Naive thymus-derived CD4-positive, alpha-beta T cell (primary cell): ENCODE measurements at regions of chr11 and their contacts with region 1.

Region 1: GRCh38 chr11:64916775-64917662 is at the start of gene ATG2A:
- DNase-seq: peak; percentile 95 to 100 (median 99)
- ATAC-seq: peak; percentile 97
- H3K4me3 ChIP-seq: peak within 1 kb of the TSS; percentile 92
- H3K4me3 Mint-ChIP-seq: peak within 1 kb of the TSS; percentile 88 to 98 (median 91)
- H3K27ac ChIP-seq: peak within 1 kb of the TSS; percentile 83
- H3K27ac Mint-ChIP-seq: peak within 1 kb of the TSS; percentile 81 to 99 (median 91)
- H3K4me1 ChIP-seq: peaks cover 18 to 22% of the 10 kb centered on the region in 2 donors
- H3K4me1 Mint-ChIP-seq: peaks cover 14 to 33% (median 25%) of the 10 kb centered on the region in 7 donors
- H3K27me3 ChIP-seq: no peaks in the 10 kb centered on the region
- H3K27me3 Mint-ChIP-seq: no peaks in the 10 kb centered on the region
- total RNA-seq, gene ATG2A: 30.6 to 105 (median 36.2) TPM

Region 2: DNA sequence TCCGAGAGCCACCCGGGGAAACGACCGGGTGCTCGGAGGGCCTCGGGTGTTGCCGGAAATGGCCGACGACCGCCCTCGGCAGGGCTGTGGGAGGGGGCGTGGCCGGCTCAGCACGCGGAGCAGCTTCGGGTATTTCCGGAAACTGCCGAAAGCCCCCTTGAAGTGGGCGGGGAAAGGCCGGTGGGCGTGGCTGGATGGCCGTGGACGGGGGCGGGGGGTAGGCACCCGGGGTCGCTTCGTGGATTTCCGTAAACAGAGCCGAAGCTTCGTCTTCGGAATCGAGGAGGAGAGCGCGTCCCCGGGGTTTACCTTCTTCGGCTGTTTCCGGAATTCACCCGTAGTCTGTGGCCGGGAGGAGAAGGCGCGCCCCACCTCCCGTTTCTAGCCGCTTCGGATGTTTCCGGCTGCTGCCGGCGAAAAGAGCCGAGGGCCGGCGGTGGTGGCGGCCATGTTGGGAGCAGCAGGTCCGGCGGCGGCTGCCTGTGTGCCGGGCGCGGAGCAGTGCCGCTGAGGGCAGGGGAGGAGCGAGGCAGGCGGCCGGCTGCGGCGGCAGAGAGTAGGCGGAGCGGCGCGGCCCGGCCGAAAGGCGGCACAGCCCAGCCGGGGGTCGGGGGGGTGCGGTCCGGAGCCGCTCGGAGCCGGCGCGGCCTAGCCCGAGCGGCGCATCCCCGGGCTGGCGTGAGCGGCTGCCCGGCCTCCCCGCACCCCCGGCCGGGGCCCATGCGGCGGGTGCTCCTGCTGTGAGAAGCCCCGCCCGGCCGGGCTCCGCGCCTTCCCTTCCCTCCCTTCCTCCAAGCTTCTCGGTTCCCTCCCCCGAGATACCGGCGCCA is 1078.1 kb before region 1 on chr11 and contains the start of gene MARK2:
- CTCF ChIA-PET with region 1: no interaction called
- POLR2A ChIA-PET with region 1: no interaction called
- intact Hi-C with region 1: no loop called
- DNase-seq: peak; percentile 99 to 100 (median 99)
- ATAC-seq: peak; percentile 93
- H3K4me3 ChIP-seq: peak within 1 kb of the TSS; percentile 87
- H3K4me3 Mint-ChIP-seq: peak within 1 kb of the TSS; percentile 86 to 99 (median 92)
- H3K27ac ChIP-seq: peak within 1 kb of the TSS; percentile 94
- H3K27ac Mint-ChIP-seq: peak within 1 kb of the TSS; percentile 74 to 97 (median 88)
- H3K4me1 ChIP-seq: peaks cover 32 to 35% of the 10 kb centered on the region in 2 donors
- H3K4me1 Mint-ChIP-seq: peaks cover 44 to 57% (median 54%) of the 10 kb centered on the region in 7 donors
- H3K27me3 ChIP-seq: no peaks in the 10 kb centered on the region
- H3K27me3 Mint-ChIP-seq: no peaks in the 10 kb centered on the region
- total RNA-seq, gene MARK2: 42.3 to 69.1 (median 56.8) TPM

Region 3: DNA sequence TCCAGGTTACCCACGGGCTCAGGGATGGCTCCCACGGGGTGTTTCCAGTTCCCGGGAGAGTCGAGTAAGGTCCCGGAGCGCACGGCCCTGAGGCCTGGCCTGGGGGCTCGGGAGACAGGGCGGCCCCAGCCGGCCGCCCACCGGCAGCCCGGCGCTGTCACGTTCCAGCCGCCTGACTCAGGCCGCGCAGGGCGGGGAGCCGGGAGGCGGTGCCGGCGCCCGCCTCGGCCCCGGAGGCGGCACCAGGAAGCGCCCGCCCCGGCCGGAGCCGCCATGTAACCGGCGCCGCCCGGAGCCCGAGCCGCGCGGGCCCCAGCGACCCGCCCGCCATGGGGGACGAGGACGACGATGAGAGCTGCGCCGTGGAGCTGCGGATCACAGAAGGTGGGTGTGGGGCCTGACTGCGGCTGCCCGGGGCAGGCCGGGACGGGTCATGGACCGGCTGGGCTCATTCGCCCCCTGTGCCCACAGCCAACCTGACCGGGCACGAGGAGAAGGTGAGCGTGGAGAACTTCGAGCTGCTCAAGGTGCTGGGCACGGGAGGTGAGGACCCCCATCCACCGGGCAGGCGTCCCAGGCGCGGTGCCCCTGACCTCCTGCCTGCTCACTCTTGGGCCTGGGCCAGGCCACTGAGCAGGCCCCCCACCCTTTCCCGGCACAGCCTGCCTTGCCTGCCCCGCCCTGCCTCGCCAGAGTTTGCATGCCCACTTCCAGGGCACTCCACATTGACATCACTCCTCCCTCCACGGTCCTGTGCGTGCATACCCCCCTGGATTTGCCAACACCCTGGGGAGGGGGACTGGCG is 557.9 kb before region 1 on chr11 and contains the start of gene RPS6KA4:
- CTCF ChIA-PET with region 1: no interaction called
- POLR2A ChIA-PET with region 1: no interaction called
- intact Hi-C with region 1: no loop called
- DNase-seq: peak in 7 of 9 donors; percentile 25 to 79 (median 36)
- ATAC-seq: peak; percentile 80
- H3K4me3 ChIP-seq: peak within 1 kb of the TSS; percentile 60
- H3K4me3 Mint-ChIP-seq: peak within 1 kb of the TSS; percentile 83 to 100 (median 91)
- H3K27ac ChIP-seq: peak within 1 kb of the TSS; percentile 68
- H3K27ac Mint-ChIP-seq: peak within 1 kb of the TSS; percentile 56 to 94 (median 72)
- H3K4me1 ChIP-seq: peaks cover 10 to 16% of the 10 kb centered on the region in 2 donors
- H3K4me1 Mint-ChIP-seq: peaks cover 16 to 40% (median 30%) of the 10 kb centered on the region in 7 donors
- H3K27me3 ChIP-seq: no peaks in the 10 kb centered on the region
- H3K27me3 Mint-ChIP-seq: no peaks in the 10 kb centered on the region
- total RNA-seq, gene RPS6KA4: 14.2 to 35.7 (median 27.9) TPM

Region 4: GRCh38 chr11:64864473-64865285 is 52.3 kb before region 1 on chr11:
- CTCF ChIA-PET with region 1: no interaction called
- POLR2A ChIA-PET with region 1: interaction called, 3 read pairs
- intact Hi-C with region 1: loop called in 1 of 2 experiments (anchors 2 kb)
- DNase-seq: peak in 1 of 9 donors; percentile 63
- ATAC-seq: no peak
- H3K4me3 ChIP-seq: peak overlapping the region; percentile 45
- H3K4me3 Mint-ChIP-seq: peak overlapping the region; percentile 45 to 91 (median 78)
- H3K27ac ChIP-seq: peak overlapping the region; percentile 76
- H3K27ac Mint-ChIP-seq: peak overlapping the region; percentile 89 to 98 (median 96)
- H3K4me1 ChIP-seq: peaks cover 86 to 98% of the 10 kb centered on the region in 2 donors
- H3K4me1 Mint-ChIP-seq: peaks cover 68 to 94% (median 82%) of the 10 kb centered on the region in 7 donors
- H3K27me3 ChIP-seq: no peaks in the 10 kb centered on the region
- H3K27me3 Mint-ChIP-seq: no peaks in the 10 kb centered on the region

Region 5: GRCh38 chr11:64878494-64879243 is 38.4 kb before region 1 on chr11 and contains the start of gene EHD1:
- CTCF ChIA-PET with region 1: interaction called, 3 read pairs
- POLR2A ChIA-PET with region 1: interaction called, 3 read pairs
- intact Hi-C with region 1: loop called (anchors 1 kb)
- DNase-seq: peak; percentile 98 to 99 (median 99)
- ATAC-seq: peak; percentile 91
- H3K4me3 ChIP-seq: peak within 1 kb of the TSS; percentile 100
- H3K4me3 Mint-ChIP-seq: peak within 1 kb of the TSS; percentile 95 to 99 (median 98)
- H3K27ac ChIP-seq: peak within 1 kb of the TSS; percentile 81
- H3K27ac Mint-ChIP-seq: peak within 1 kb of the TSS; percentile 88 to 98 (median 94)
- H3K4me1 ChIP-seq: peaks cover 39 to 45% of the 10 kb centered on the region in 2 donors
- H3K4me1 Mint-ChIP-seq: peaks cover 49 to 65% (median 60%) of the 10 kb centered on the region in 7 donors
- H3K27me3 ChIP-seq: no peaks in the 10 kb centered on the region
- H3K27me3 Mint-ChIP-seq: no peaks in the 10 kb centered on the region
- total RNA-seq, gene EHD1: 124 to 263 (median 208) TPM

Region 6: GRCh38 chr11:64900263-64900678 is 16.7 kb before region 1 on chr11:
- CTCF ChIA-PET with region 1: no interaction called
- POLR2A ChIA-PET with region 1: interaction called, 4 read pairs
- intact Hi-C with region 1: loop called in 1 of 2 experiments (anchors 1 kb)
- DNase-seq: peak in 5 of 9 donors; percentile 34 to 79 (median 38)
- ATAC-seq: peak; percentile 87
- H3K4me3 ChIP-seq: no peak overlapping the region
- H3K4me3 Mint-ChIP-seq: peak overlapping the region in 7 of 10 donors; percentile 3 to 73 (median 38)
- H3K27ac ChIP-seq: peak overlapping the region; percentile 65
- H3K27ac Mint-ChIP-seq: peak overlapping the region; percentile 50 to 91 (median 80)
- H3K4me1 ChIP-seq: peaks cover 7 to 8% of the 10 kb centered on the region in 2 donors
- H3K4me1 Mint-ChIP-seq: peaks cover 3 to 19% (median 13%) of the 10 kb centered on the region in 7 donors
- H3K27me3 ChIP-seq: no peaks in the 10 kb centered on the region
- H3K27me3 Mint-ChIP-seq: no peaks in the 10 kb centered on the region

Region 7: GRCh38 chr11:65060913-65061408 is 143.9 kb after region 1 on chr11:
- CTCF ChIA-PET with region 1: no interaction called
- POLR2A ChIA-PET with region 1: no interaction called
- intact Hi-C with region 1: no loop called
- DNase-seq: no peak
- ATAC-seq: no peak
- H3K4me3 ChIP-seq: no peak overlapping the region
- H3K4me3 Mint-ChIP-seq: no peak overlapping the region
- H3K27ac ChIP-seq: no peak overlapping the region
- H3K27ac Mint-ChIP-seq: peak overlapping the region in 1 of 9 donors; percentile 25
- H3K4me1 ChIP-seq: no peaks in the 10 kb centered on the region
- H3K4me1 Mint-ChIP-seq: peaks cover 0 to 18% (median 0%) of the 10 kb centered on the region in 7 donors
- H3K27me3 ChIP-seq: no peaks in the 10 kb centered on the region
- H3K27me3 Mint-ChIP-seq: no peaks in the 10 kb centered on the region

Region 8: GRCh38 chr11:65083834-65084597 is 167.0 kb after region 1 on chr11 and contains the starts of genes CDCA5 and ZFPL1:
- CTCF ChIA-PET with region 1: no interaction called
- POLR2A ChIA-PET with region 1: no interaction called
- intact Hi-C with region 1: loop called in 1 of 2 experiments (anchors 1 kb)
- DNase-seq: peak; percentile 94 to 98 (median 97)
- ATAC-seq: peak; percentile 96
- H3K4me3 ChIP-seq: peak within 1 kb of the TSS; percentile 61
- H3K4me3 Mint-ChIP-seq: peak within 1 kb of the TSS; percentile 88 to 99 (median 93)
- H3K27ac ChIP-seq: peak within 1 kb of the TSS; percentile 86
- H3K27ac Mint-ChIP-seq: peak within 1 kb of the TSS; percentile 94 to 99 (median 97)
- H3K4me1 ChIP-seq: peaks cover 13 to 14% of the 10 kb centered on the region in 2 donors
- H3K4me1 Mint-ChIP-seq: peaks cover 20 to 49% (median 27%) of the 10 kb centered on the region in 7 donors
- H3K27me3 ChIP-seq: no peaks in the 10 kb centered on the region
- H3K27me3 Mint-ChIP-seq: peaks cover 0 to 4% (median 0%) of the 10 kb centered on the region in 5 donors
- total RNA-seq, gene CDCA5: 0.56 to 68.1 (median 0.81) TPM
- total RNA-seq, gene ZFPL1: 29.9 to 53.0 (median 49.3) TPM

Region 9: GRCh38 chr11:65095974-65096806 is 179.2 kb after region 1 on chr11 and contains the start of gene VPS51:
- CTCF ChIA-PET with region 1: interaction called, 3 read pairs
- POLR2A ChIA-PET with region 1: no interaction called
- intact Hi-C with region 1: loop called (anchors 1 to 5 kb)
- DNase-seq: peak; percentile 71 to 92 (median 87)
- ATAC-seq: peak; percentile 93
- H3K4me3 ChIP-seq: peak within 1 kb of the TSS; percentile 92
- H3K4me3 Mint-ChIP-seq: peak within 1 kb of the TSS; percentile 83 to 97 (median 94)
- H3K27ac ChIP-seq: peak within 1 kb of the TSS; percentile 88
- H3K27ac Mint-ChIP-seq: peak within 1 kb of the TSS; percentile 89 to 98 (median 97)
- H3K4me1 ChIP-seq: peaks cover 9 to 15% of the 10 kb centered on the region in 2 donors
- H3K4me1 Mint-ChIP-seq: peaks cover 8 to 28% (median 19%) of the 10 kb centered on the region in 7 donors
- H3K27me3 ChIP-seq: no peaks in the 10 kb centered on the region
- H3K27me3 Mint-ChIP-seq: no peaks in the 10 kb centered on the region
- total RNA-seq, gene VPS51: 159 to 269 (median 256) TPM

Region 10: GRCh38 chr11:65111744-65112414 is 194.9 kb after region 1 on chr11 and contains the start of gene TM7SF2:
- CTCF ChIA-PET with region 1: no interaction called
- POLR2A ChIA-PET with region 1: interaction called, 3 read pairs
- intact Hi-C with region 1: loop called (anchors 1 kb)
- DNase-seq: peak; percentile 84 to 94 (median 92)
- ATAC-seq: peak; percentile 82
- H3K4me3 ChIP-seq: peak within 1 kb of the TSS; percentile 83
- H3K4me3 Mint-ChIP-seq: peak within 1 kb of the TSS; percentile 85 to 97 (median 89)
- H3K27ac ChIP-seq: peak within 1 kb of the TSS; percentile 74
- H3K27ac Mint-ChIP-seq: peak within 1 kb of the TSS; percentile 80 to 100 (median 90)
- H3K4me1 ChIP-seq: peaks cover 33 to 36% of the 10 kb centered on the region in 2 donors
- H3K4me1 Mint-ChIP-seq: peaks cover 18 to 52% (median 38%) of the 10 kb centered on the region in 7 donors
- H3K27me3 ChIP-seq: no peaks in the 10 kb centered on the region
- H3K27me3 Mint-ChIP-seq: no peaks in the 10 kb centered on the region
- total RNA-seq, gene TM7SF2: 21.6 to 37.8 (median 30.8) TPM